Activated CD4-positive, alpha-beta memory T cell treated with anti-CD3 and anti-CD28 coated beads for 36 hours (primary cell): ENCODE measurements at regions of chr1 and their contacts with region 1.

Region 1: DNA sequence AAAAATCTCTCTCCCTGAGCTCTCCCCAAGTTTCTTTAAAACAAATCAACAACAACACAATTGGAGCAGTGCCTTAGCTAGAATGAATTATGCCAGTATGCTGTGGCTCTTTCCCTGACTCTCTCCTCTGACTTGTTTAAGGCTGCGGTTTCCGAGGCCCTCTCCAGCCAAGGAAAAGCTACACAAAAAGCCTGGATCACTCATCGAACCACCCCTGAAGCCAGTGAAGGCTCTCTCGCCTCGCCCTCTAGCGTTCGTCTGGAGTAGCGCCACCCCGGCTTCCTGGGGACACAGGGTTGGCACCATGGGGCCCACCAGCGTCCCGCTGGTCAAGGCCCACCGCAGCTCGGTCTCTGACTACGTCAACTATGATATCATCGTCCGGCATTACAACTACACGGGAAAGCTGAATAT is 1.9 kb downstream of the S1PR1 start:
- DNase-seq: peak; percentile 95
- H3K4me3 Mint-ChIP-seq: peak overlapping the region; percentile 94
- H3K27ac Mint-ChIP-seq: peak overlapping the region; percentile 100
- H3K4me1 Mint-ChIP-seq: peaks cover 47% of the 10 kb centered on the region
- H3K27me3 Mint-ChIP-seq: peaks cover 2% of the 10 kb centered on the region

Region 2: DNA sequence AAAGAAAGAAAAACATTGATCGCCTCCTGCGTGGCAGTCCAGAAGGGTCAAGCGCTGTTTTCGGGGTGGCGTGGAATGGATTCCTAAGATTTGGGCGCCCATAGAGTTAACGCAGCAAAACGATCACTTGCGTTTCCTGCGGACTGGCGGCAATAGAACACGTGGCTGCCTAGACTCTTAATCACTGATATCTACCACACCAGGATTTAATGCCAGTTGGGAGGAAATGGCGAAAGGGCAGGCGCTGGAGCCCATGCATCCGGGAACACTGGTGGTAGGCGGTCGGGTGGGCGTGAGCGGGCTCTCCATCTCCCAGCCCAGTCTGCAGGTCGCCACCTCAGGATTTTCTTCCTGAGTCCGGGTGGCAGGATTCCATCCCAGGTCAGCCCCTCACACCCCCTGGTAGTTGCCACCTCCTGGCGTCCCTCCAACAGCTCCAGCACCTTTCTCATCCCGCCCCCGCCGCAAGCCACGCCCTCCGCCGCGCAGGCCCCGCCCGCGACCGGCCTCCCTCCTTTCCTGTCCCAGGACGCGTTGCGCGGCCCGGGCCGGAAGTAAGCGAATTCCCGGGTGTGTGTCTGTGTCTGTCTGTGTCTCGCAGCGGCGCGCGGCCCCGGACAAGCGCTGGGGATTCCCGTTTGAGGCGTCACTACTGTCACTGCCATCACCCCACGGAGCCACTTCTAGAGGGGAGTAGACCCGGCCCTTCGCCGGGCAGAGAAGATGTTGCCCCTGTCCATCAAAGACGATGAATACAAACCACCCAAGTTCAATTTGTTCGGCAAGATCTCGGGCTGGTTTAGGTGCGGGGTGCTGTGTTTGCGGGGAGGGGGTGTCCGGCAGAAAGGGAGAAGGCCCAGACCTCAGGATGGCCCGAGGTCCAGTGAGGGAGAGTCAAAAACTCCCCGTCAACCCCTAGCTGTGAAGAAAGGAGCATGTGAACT is 342.9 kb before region 1 on chr1 and contains the start of gene SLC30A7:
- CTCF ChIA-PET with region 1: interaction called, 4 read pairs
- POLR2A ChIA-PET with region 1: interaction called, 15 read pairs
- intact Hi-C with region 1: loop called (anchors 1 kb)
- DNase-seq: peak; percentile 98
- H3K4me3 Mint-ChIP-seq: peak within 1 kb of the TSS; percentile 99
- H3K27ac Mint-ChIP-seq: peak within 1 kb of the TSS; percentile 100
- H3K4me1 Mint-ChIP-seq: peaks cover 40% of the 10 kb centered on the region
- H3K27me3 Mint-ChIP-seq: no peaks in the 10 kb centered on the region
- total RNA-seq, gene SLC30A7: 40.0 to 43.4 TPM

Region 3: GRCh38 chr1:101112051-101112780 is 126.5 kb before region 1 on chr1:
- CTCF ChIA-PET with region 1: interaction called, 5 read pairs
- POLR2A ChIA-PET with region 1: no interaction called
- intact Hi-C with region 1: loop called (anchors 1 kb)
- DNase-seq: peak; percentile 76
- H3K4me3 Mint-ChIP-seq: peak overlapping the region; percentile 25
- H3K27ac Mint-ChIP-seq: peak overlapping the region; percentile 87
- H3K4me1 Mint-ChIP-seq: peaks cover 56% of the 10 kb centered on the region
- H3K27me3 Mint-ChIP-seq: no peaks in the 10 kb centered on the region

Region 4: DNA sequence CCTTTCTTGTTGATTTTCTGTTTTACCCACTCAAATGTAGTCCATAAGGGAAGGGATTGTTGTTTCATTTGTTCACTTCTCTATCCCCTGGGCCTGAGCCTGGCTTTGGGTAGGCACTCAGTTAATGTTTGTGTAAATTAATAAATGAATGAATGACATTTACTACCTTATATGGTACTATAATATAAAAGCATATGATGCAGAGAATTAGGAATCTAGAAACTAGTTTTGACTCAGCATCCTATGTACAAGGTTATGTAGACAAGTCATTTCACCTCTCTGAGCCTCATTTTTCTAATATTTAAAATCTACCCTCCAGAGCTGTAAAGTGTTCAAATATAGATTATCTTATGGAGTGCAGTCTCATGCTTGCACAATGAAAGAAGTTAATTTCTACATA is 70.8 kb before region 1 on chr1:
- CTCF ChIA-PET with region 1: interaction called, 6 read pairs
- POLR2A ChIA-PET with region 1: interaction called, 3 read pairs
- intact Hi-C with region 1: loop called (anchors 1 kb)
- DNase-seq: no peak
- H3K4me3 Mint-ChIP-seq: no peak overlapping the region
- H3K27ac Mint-ChIP-seq: peak overlapping the region; percentile 61
- H3K4me1 Mint-ChIP-seq: peaks cover 40% of the 10 kb centered on the region
- H3K27me3 Mint-ChIP-seq: no peaks in the 10 kb centered on the region

Region 5: GRCh38 chr1:101216623-101217022 is 22.1 kb before region 1 on chr1:
- CTCF ChIA-PET with region 1: interaction called, 4 read pairs
- POLR2A ChIA-PET with region 1: interaction called, 13 read pairs
- intact Hi-C with region 1: loop called (anchors 1 kb)
- DNase-seq: no peak
- H3K4me3 Mint-ChIP-seq: no peak overlapping the region
- H3K27ac Mint-ChIP-seq: no peak overlapping the region
- H3K4me1 Mint-ChIP-seq: peaks cover 29% of the 10 kb centered on the region
- H3K27me3 Mint-ChIP-seq: no peaks in the 10 kb centered on the region

Region 6: DNA sequence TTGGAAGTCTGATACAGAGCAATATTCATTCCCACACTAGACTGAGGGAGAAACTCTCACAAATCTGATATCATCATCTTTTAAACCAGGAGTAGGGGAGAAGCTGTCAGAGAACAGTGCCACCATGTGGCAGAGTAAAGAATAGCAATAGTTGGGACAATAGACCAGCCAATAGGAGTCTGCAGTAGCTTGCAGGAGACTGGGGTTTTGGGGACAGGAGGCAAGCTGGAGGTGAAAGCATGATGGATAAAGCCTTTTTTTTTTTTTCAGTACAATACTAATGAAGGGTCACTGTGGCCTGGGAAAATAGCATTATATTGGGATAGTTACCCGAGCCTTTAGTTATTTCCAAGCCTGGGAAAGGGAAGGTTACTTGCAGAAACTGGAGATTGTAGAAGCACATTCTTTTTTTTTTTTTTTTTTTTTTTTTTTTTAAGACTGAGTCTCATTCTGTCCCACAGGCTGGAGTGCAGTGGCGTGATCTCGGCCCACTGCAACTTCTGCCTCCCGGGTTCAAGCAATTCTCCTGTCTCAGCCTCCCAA is 118.8 kb after region 1 on chr1:
- CTCF ChIA-PET with region 1: interaction called, 14 read pairs
- POLR2A ChIA-PET with region 1: no interaction called
- intact Hi-C with region 1: loop called (anchors 1 kb)
- DNase-seq: peak; percentile 73
- H3K4me3 Mint-ChIP-seq: no peak overlapping the region
- H3K27ac Mint-ChIP-seq: peak overlapping the region; percentile 36
- H3K4me1 Mint-ChIP-seq: peaks cover 8% of the 10 kb centered on the region
- H3K27me3 Mint-ChIP-seq: no peaks in the 10 kb centered on the region